ENCODE measurements at regions of chr11 and their contacts with region 1.

Region 1: DNA sequence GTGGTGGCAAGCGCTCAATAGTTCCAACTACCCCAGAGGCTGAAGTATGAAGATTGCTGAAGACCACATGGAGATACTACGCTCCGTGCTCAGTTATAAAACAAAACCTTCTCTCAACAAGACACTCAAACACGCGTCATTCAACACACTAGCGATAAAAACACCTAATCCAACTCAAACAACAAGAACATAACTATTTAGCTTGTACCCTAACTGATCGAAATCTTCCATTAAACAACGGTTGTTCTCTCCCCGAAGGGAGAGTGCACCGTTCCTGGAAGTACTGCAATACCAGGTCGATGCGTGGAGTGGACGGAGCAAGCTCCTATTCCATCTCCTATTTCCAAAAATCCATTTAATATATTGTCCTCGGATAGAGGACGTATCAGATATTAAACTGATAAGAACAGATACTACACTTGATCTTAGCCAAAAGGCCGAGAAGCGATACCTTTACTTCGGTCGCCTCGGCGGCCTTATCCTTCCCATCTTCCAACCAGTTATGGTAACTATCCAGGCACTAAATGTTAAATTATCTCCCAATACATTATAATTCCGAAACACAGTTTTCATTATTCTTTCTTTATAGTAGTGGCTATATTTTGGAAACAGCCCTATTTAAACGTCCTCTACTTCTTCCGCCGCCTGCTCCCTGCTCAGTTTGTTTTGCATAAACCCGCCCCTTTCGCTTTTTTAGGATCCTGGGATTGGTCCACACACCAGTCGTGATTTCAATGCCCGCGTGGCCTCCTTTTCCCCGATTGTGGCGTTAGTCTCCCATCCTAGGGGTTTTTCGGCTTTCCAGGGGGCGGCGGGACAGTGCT is 2.2 kb upstream of the WDR74 start:
- DNase-seq: peak; percentile 96 to 98
- H3K4me3 ChIP-seq: peak overlapping the region; percentile 99
- H3K4me3 Mint-ChIP-seq: no peak overlapping the region
- H3K27ac Mint-ChIP-seq: no peak overlapping the region
- H3K4me1 ChIP-seq: no peaks in the 10 kb centered on the region
- H3K4me1 Mint-ChIP-seq: peaks cover 25% of the 10 kb centered on the region
- H3K27me3 ChIP-seq: no peaks in the 10 kb centered on the region
- H3K27me3 Mint-ChIP-seq: peaks cover 2% of the 10 kb centered on the region
- CTCF ChIP-seq: no peak

Region 2: DNA sequence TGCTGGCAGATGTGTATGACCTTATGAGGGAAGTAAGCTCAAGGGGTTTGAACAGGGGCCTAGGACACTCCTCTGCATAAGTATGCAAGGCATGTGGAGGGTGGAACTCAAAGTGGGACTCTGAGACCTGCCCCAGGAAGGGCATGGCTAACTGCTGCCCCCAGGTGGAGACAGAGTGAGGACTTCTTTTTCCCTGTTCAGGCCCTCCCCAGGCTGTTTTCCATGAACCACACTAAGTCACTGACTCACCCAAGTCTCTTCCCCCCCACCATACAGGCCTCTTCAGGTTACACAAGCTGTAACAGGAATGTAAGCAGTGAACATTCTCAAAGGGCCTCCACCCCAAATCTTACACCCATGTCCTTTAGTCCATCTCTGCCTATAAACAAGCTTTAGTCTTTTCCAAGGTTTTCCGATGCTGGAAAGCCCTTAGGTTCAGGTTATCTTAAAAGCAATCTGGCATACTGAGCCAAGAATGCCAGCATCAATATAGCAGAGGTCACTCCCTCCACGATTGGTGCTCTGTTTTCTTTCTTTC is 280.9 kb before region 1 on chr11:
- CTCF ChIA-PET with region 1: no interaction called
- POLR2A ChIA-PET with region 1: no interaction called
- intact Hi-C with region 1: no loop called
- DNase-seq: peak; percentile 97 to 98
- H3K4me3 ChIP-seq: no peak overlapping the region
- H3K4me3 Mint-ChIP-seq: peak overlapping the region; percentile 50
- H3K27ac Mint-ChIP-seq: peak overlapping the region; percentile 71
- H3K4me1 ChIP-seq: peaks cover 74% of the 10 kb centered on the region
- H3K4me1 Mint-ChIP-seq: peaks cover 59% of the 10 kb centered on the region
- H3K27me3 ChIP-seq: no peaks in the 10 kb centered on the region
- H3K27me3 Mint-ChIP-seq: no peaks in the 10 kb centered on the region
- CTCF ChIP-seq: peak; percentile 91 to 94

Region 3: DNA sequence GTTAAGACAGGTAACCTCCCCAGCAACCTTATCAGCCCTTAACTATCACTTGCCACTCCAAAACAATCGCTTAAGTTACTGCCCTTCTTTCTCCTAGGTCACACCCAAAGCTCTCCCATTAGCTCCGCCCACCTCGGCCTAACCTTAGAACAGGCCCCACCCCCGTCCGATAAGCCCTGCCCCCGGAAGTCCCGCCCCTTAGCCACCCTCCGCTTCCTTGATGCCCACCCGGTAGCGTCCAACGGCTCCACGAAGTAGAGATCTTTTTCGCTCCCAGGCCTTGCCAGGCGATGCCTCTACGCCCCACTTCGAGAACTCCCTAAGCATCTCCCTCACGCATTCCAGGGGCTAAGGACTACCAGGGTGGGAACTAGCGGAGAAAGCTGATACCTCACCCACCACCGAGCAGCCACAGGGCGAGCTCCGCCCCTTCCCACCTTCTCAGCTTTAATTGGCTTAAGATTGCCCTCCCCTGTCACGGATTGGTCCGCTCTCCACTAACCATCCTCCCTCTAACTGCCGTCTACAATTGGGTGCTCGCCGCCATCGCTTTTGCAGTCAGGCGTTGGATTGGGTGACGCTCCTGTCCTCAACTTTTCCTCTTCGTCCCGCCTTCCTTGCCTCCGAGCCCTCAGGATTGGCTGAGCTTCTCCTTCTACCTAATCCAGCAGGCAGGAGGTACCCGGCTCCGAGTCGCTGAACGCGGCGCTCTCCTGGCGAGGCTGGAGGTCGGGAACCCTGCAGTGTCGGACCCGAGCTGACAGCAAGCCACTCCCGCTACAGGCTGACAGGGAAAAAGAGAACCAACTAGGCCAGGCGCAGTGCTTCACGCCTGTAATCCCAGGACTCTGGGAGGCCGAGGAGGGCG is 87.6 kb before region 1 on chr11 and contains the start of gene ZBTB3:
- CTCF ChIA-PET with region 1: no interaction called
- POLR2A ChIA-PET with region 1: interaction called, 17 read pairs
- intact Hi-C with region 1: no loop called
- DNase-seq: peak; percentile 98 to 99
- H3K4me3 ChIP-seq: peak within 1 kb of the TSS; percentile 56
- H3K4me3 Mint-ChIP-seq: peak within 1 kb of the TSS; percentile 97
- H3K27ac Mint-ChIP-seq: peak within 1 kb of the TSS; percentile 95
- H3K4me1 ChIP-seq: peaks cover 9% of the 10 kb centered on the region; the same call in 1 of the 2 replicates
- H3K4me1 Mint-ChIP-seq: no peaks in the 10 kb centered on the region
- H3K27me3 ChIP-seq: no peaks in the 10 kb centered on the region
- H3K27me3 Mint-ChIP-seq: no peaks in the 10 kb centered on the region
- CTCF ChIP-seq: no peak
- total RNA-seq, gene ZBTB3: 8.2 and 10.9 TPM in 2 replicates

Region 4: GRCh38 chr11:62787005-62787759 is 54.4 kb before region 1 on chr11 and contains the start of gene TMEM179B:
- CTCF ChIA-PET with region 1: interaction called, 10 read pairs
- POLR2A ChIA-PET with region 1: interaction called, 16 read pairs
- intact Hi-C with region 1: loop called (anchors 1 kb)
- DNase-seq: peak; percentile 98
- H3K4me3 ChIP-seq: peak within 1 kb of the TSS; percentile 79
- H3K4me3 Mint-ChIP-seq: peak within 1 kb of the TSS; percentile 91
- H3K27ac Mint-ChIP-seq: peak within 1 kb of the TSS; percentile 95
- H3K4me1 ChIP-seq: peaks cover 7% of the 10 kb centered on the region
- H3K4me1 Mint-ChIP-seq: peaks cover 9% of the 10 kb centered on the region
- H3K27me3 ChIP-seq: no peaks in the 10 kb centered on the region
- H3K27me3 Mint-ChIP-seq: no peaks in the 10 kb centered on the region
- CTCF ChIP-seq: peak; percentile 24 to 82
- total RNA-seq, gene TMEM179B: 59.9 and 68.4 TPM in 2 replicates

Region 5: DNA sequence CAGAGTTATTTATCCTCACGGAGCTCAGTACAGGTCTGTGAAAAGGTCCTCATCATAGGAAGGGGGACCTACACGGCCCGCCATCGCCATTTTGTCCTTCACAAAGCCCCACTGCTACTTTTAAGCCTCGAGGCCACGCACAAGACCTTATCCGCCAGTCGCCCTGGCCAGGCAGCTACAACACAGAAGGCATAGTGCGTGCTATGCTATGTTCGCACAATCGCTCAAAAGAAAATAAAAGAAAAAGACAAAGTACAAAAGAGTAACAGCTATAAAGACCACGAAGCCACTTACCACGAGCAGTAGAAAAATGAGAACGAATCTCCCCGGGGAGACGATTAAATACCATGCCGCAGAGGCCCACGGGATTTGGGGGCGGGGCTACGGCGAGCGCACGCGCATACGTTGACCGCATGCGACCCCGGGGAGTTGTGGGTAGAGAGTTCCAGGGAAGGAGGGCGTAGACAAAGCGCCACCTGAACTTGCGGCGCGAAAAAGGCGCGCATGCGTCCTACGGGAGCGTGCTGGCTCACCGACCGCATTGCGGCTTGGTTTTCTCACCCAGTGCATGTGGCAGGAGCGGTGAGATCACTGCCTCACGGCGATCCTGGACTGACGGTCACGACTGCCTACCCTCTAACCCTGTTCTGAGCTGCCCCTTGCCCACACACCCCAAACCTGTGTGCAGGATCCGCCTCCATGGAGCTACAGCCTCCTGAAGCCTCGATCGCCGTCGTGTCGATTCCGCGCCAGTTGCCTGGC is 14.2 kb after region 1 on chr11:
- CTCF ChIA-PET with region 1: interaction called, 4 read pairs
- POLR2A ChIA-PET with region 1: interaction called, 59 read pairs
- intact Hi-C with region 1: loop called (anchors 1 kb)
- DNase-seq: peak; percentile 98 to 99
- H3K4me3 ChIP-seq: peak overlapping the region; percentile 92
- H3K4me3 Mint-ChIP-seq: peak overlapping the region; percentile 77
- H3K27ac Mint-ChIP-seq: peak overlapping the region; percentile 85
- H3K4me1 ChIP-seq: peaks cover 46% of the 10 kb centered on the region
- H3K4me1 Mint-ChIP-seq: peaks cover 45% of the 10 kb centered on the region
- H3K27me3 ChIP-seq: no peaks in the 10 kb centered on the region
- H3K27me3 Mint-ChIP-seq: no peaks in the 10 kb centered on the region
- CTCF ChIP-seq: no peak

Region 6: DNA sequence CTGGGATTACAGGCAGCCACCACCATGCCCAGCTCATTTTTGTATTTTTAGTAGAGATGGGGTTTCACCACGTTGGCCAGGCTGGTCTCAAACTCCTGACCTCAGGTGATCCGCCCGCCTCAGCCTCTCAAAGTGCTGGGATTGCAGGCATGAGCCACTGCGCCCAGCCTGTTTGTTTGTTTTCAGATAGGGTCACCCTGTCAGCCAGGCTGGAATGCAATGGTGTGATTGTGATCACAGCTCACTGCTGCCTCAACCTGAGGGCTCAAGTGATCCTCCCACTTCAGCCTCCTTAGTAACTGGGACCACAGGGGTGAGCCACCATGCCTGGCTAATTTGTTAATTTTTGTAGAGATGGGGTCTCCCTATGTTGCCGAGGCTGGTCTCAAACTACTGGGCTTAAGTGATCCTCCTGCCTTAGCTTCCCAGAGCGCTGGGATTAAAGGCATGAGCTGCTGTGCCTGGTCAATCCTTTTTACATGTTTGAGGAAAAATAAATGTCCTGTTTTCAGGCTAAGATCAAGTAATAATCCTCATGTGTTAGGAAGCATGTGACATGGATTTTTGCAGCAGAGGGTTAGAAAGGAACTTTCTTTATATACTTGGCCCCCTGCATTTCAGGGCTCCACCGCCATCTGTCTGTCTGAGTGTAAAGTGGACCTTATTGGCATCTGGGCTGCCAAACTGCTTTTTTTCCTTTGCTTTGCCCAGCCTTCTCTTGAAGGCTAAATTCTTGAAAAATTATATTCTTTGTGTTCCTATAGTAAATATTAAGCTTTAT is 34.3 kb after region 1 on chr11:
- CTCF ChIA-PET with region 1: interaction called, 3 read pairs
- POLR2A ChIA-PET with region 1: interaction called, 17 read pairs
- intact Hi-C with region 1: loop called (anchors 1 kb)
- DNase-seq: peak; percentile 65 to 74
- H3K4me3 ChIP-seq: no peak overlapping the region
- H3K4me3 Mint-ChIP-seq: no peak overlapping the region
- H3K27ac Mint-ChIP-seq: peak overlapping the region; percentile 50
- H3K4me1 ChIP-seq: peaks cover 34% of the 10 kb centered on the region
- H3K4me1 Mint-ChIP-seq: peaks cover 20% of the 10 kb centered on the region
- H3K27me3 ChIP-seq: no peaks in the 10 kb centered on the region
- H3K27me3 Mint-ChIP-seq: no peaks in the 10 kb centered on the region
- CTCF ChIP-seq: peak in 1 of 2 experiments; percentile 9

Region 7: DNA sequence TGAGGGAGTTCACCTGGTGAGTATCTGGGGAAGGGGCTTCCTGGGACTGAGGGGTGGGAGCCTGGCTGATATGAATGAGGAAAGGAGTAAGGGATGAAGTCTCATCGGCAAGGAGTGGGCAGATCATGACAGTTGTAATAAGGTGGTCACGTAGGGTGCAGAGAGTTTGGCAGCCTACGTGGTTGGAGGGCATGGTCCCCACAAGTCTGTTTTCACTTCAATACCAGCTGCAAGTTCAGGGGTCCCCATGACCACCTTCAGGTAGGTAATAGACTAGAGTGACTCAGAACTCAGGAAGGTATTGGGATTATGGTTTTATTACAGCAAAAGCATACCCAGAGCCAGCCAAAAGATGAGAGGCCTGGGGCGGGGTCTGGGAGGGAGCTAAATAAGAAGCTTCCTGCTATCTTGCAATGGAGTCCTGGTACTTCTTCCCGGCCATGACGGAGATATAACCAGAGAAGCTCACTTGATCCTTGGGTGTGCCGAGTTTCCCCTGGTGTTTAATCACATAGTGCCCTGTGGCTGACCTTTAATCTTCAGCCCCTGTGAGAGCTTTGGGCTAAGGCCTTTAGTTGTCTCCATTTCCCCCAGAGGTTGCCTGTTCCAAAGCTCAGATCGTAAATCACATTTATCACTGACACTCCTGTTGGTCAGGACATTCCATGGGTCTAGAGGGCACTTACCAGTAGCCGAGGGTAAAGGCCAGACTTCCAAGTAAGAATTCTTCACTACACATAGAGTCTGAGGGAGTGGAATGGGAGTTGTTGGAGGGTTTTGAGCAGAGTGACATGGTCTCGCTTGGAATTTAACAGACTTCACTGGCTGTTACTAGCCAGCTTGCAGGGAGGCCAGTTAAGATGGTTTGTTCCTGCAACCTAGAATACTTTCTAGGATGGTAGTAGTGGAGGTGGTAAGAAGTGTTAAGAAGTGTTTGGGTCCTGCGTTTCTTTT is 48.2 kb after region 1 on chr11:
- CTCF ChIA-PET with region 1: no interaction called
- POLR2A ChIA-PET with region 1: interaction called, 18 read pairs
- intact Hi-C with region 1: no loop called
- DNase-seq: peak; percentile 90 to 97
- H3K4me3 ChIP-seq: no peak overlapping the region
- H3K4me3 Mint-ChIP-seq: peak overlapping the region; percentile 64
- H3K27ac Mint-ChIP-seq: peak overlapping the region; percentile 83
- H3K4me1 ChIP-seq: peaks cover 70% of the 10 kb centered on the region
- H3K4me1 Mint-ChIP-seq: peaks cover 59% of the 10 kb centered on the region
- H3K27me3 ChIP-seq: no peaks in the 10 kb centered on the region
- H3K27me3 Mint-ChIP-seq: no peaks in the 10 kb centered on the region
- CTCF ChIP-seq: no peak

Region 8: DNA sequence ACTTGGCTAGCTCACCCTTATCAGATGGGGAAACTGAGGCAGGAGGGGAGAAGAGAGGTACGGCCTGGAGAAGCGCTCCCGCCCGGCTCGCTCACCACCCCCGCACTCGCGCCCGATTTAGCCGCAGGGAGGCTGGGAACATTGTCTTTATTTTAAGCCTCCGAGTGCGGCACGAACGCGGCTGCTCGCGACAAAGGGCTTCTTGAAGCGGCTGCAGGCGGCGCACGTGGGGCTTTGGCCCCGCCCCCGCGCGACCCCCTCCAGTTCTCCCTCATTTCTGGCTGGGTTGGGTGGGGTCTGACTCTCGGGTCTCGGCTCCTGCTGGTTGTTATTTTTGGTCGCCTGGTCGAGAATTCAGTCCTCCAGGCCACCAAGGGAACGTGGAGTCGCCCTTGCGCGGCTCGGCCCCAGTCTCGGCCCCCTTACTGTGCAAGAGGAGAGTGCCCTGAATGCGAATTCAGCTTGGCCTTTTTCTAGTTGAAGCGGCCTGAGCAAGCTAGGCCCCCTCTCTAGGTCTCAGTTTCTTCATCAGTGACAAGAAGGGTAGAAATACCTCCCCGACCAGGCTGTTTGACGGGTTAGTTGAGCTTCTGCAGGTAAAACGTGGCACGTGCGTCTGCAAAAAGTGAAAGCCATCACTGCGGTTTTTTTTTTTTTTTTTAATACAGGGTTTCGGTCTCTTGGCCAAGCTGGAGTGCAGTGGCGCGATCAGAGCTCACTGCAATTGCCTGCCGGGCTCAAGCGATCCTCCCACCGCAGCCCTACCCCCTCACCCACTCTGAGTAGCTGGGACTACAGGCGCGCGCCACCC is 82.2 kb after region 1 on chr11:
- CTCF ChIA-PET with region 1: no interaction called
- POLR2A ChIA-PET with region 1: no interaction called
- intact Hi-C with region 1: no loop called
- DNase-seq: no peak
- H3K4me3 ChIP-seq: no peak overlapping the region
- H3K4me3 Mint-ChIP-seq: no peak overlapping the region
- H3K27ac Mint-ChIP-seq: no peak overlapping the region
- H3K4me1 ChIP-seq: peaks cover 18% of the 10 kb centered on the region
- H3K4me1 Mint-ChIP-seq: peaks cover 21% of the 10 kb centered on the region
- H3K27me3 ChIP-seq: no peaks in the 10 kb centered on the region
- H3K27me3 Mint-ChIP-seq: no peaks in the 10 kb centered on the region
- CTCF ChIP-seq: no peak

Region 9: DNA sequence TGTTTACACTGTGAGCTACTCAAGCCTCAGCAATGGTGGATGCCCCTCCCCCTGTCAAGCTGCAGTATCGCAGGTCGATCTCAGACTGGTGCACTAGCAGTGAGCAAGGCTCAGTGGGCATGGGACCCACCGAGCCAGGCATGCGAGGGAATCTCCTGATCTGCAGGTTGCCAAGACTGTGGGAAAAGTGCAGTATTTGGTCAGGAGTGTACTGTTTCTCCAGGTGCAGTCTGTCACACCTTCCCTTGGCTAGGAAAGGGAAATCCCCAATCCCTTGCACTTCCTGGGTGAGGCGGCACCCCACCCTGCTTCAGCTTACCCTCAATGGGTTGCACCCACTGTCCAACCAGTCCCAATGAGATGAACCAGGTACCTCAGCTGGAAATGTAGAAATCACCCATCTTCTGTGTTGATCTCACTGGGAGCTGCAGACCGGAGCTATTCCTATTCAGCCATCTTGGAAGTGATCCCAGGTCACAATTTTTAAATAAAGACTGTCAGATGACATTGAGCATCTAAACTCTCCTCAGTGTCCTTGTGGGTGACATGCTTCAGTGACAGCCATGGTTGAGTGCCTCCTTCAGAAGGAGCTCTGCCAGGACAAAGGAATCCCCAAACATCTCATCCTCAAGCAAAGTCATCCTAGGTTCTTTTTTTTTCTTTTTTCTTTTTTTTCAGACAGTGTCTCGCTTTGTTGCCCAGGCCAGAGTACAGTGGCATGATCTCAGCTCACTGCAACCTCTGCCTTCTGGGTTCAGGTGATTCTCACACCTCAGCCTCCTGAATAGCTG is 291.6 kb after region 1 on chr11:
- CTCF ChIA-PET with region 1: no interaction called
- POLR2A ChIA-PET with region 1: no interaction called
- intact Hi-C with region 1: no loop called
- DNase-seq: no peak
- H3K4me3 ChIP-seq: no peak overlapping the region
- H3K4me3 Mint-ChIP-seq: no peak overlapping the region
- H3K27ac Mint-ChIP-seq: no peak overlapping the region
- H3K4me1 ChIP-seq: no peaks in the 10 kb centered on the region
- H3K4me1 Mint-ChIP-seq: no peaks in the 10 kb centered on the region
- H3K27me3 ChIP-seq: no peaks in the 10 kb centered on the region
- H3K27me3 Mint-ChIP-seq: peaks cover 2% of the 10 kb centered on the region
- CTCF ChIP-seq: no peak